MCF 10A (cell line): ENCODE measurements at regions of chr2 and their contacts with region 1.

Region 1: GRCh38 chr2:45237850-45238542 is 228.7 kb upstream of the SIX2 start:
- DNase-seq: peak; percentile 96
- H3K4me3 Mint-ChIP-seq: peak overlapping the region; percentile 22
- H3K27ac Mint-ChIP-seq: peak overlapping the region; percentile 95
- H3K4me1 Mint-ChIP-seq: peaks cover 23% of the 10 kb centered on the region
- H3K27me3 Mint-ChIP-seq: no peaks in the 10 kb centered on the region
- CTCF ChIP-seq: peak; percentile 34

Region 2: GRCh38 chr2:45184606-45185005 is 53.4 kb before region 1 on chr2:
- CTCF ChIA-PET with region 1: no interaction called
- POLR2A ChIA-PET with region 1: no interaction called
- intact Hi-C with region 1: no loop called
- DNase-seq: peak; percentile 87
- H3K4me3 Mint-ChIP-seq: no peak overlapping the region
- H3K27ac Mint-ChIP-seq: peak overlapping the region; percentile 62
- H3K4me1 Mint-ChIP-seq: peaks cover 52% of the 10 kb centered on the region
- H3K27me3 Mint-ChIP-seq: no peaks in the 10 kb centered on the region
- CTCF ChIP-seq: no peak

Region 3: DNA sequence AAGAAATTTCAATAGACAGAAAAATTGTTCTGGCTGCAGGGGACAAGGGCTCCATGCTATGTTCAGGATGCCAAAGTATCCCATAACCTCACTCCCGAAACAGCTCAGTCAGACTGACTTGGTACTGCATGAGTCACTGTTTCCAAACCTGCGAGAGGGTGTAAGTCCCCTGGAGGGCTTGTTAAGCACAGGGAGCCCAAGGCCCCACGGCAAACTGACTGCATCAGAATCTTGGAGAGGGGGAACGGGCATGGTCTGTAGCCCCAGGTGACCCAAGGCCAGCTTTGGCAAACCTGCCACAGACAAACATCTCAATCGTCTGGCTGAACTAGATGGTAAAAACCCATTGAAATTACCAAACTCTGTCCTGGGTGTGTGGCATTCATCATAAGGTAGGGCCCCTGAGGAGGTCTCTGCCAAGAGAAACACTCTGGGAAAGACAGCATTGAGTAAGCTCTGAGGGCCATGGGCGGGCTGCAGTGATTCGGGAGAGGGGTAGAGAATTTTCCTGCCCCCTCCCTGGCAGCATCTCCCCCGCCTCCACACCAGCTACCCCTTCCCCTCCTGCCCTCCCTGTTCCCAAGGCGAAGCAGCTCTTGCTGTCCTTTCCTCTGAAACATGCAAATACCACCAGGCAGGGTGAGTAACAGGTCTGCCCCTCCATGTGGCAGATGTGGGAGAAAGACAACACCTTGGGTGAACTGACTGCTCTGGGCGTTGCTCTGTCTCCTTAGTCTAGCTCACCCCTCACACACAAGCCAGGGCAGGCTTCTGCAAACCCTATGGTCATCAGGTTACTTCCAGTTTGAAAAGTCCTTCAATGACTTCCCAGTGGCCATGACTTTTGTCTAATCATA is 46.0 kb after region 1 on chr2:
- CTCF ChIA-PET with region 1: interaction called, 3 read pairs
- POLR2A ChIA-PET with region 1: interaction called, 3 read pairs
- intact Hi-C with region 1: loop called (anchors 1 kb)
- DNase-seq: peak; percentile 97
- H3K4me3 Mint-ChIP-seq: peak overlapping the region; percentile 36
- H3K27ac Mint-ChIP-seq: peak overlapping the region; percentile 44
- H3K4me1 Mint-ChIP-seq: peaks cover 24% of the 10 kb centered on the region
- H3K27me3 Mint-ChIP-seq: no peaks in the 10 kb centered on the region
- CTCF ChIP-seq: no peak

Region 4: DNA sequence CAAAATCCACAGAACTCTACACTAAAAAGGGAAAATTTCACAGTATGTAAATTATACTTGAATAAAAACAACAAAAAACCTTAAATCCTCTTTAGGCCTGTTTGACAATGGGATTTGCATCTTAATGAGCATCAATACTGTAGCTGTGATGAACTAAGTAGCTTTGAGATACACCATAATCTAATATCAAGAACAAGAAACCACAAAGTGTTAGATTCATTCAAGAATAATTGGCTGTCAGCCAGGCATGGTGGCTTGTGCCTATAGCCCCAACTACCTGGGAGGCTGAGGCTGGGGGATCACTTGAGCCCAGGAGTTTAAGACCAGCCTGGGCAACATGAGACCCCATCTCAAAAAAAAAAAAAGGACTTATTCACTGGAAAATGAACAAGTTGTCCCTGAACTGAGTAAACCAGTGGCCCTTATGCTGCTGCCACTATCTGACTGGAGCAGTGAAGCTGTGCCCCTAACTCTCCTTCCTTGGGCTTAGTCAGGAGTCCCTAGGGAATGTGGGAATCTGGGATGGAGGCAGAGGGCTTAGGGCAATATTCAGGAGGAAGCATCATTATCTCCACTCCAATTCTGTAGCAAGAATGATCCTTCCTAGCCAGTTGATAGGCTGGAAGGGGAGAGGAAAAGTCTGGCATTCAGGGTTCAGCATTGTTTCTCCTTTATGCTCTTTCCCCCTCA is 501.9 kb after region 1 on chr2:
- CTCF ChIA-PET with region 1: no interaction called
- POLR2A ChIA-PET with region 1: no interaction called
- intact Hi-C with region 1: no loop called
- DNase-seq: no peak
- H3K4me3 Mint-ChIP-seq: no peak overlapping the region
- H3K27ac Mint-ChIP-seq: no peak overlapping the region
- H3K4me1 Mint-ChIP-seq: no peaks in the 10 kb centered on the region
- H3K27me3 Mint-ChIP-seq: no peaks in the 10 kb centered on the region
- CTCF ChIP-seq: no peak